Activated CD4-positive, alpha-beta memory T cell treated with anti-CD3 and anti-CD28 coated beads for 36 hours (primary cell): ENCODE measurements at regions of chr4 and their contacts with region 1.

Region 1: GRCh38 chr4:70559211-70559830 is 32.7 kb upstream of the AMBN start:
- DNase-seq: peak; percentile 55
- H3K4me3 Mint-ChIP-seq: no peak overlapping the region
- H3K27ac Mint-ChIP-seq: no peak overlapping the region
- H3K4me1 Mint-ChIP-seq: peaks cover 4% of the 10 kb centered on the region
- H3K27me3 Mint-ChIP-seq: no peaks in the 10 kb centered on the region

Region 2: GRCh38 chr4:70505151-70505748 is 54.1 kb before region 1 on chr4:
- CTCF ChIA-PET with region 1: interaction called, 4 read pairs
- POLR2A ChIA-PET with region 1: no interaction called
- intact Hi-C with region 1: loop called (anchors 5 kb)
- DNase-seq: peak; percentile 58
- H3K4me3 Mint-ChIP-seq: no peak overlapping the region
- H3K27ac Mint-ChIP-seq: no peak overlapping the region
- H3K4me1 Mint-ChIP-seq: no peaks in the 10 kb centered on the region
- H3K27me3 Mint-ChIP-seq: no peaks in the 10 kb centered on the region